Activated B cell treated with CpG ODN at 0.5 μM for 24 hours (primary cell): ENCODE measurements at regions of chr14 and their contacts with region 1.

Region 1: GRCh38 chr14:77028384-77029231 is at the start of gene IRF2BPL:
- DNase-seq: peak; percentile 89
- ATAC-seq: peak; percentile 68
- H3K4me3 Mint-ChIP-seq: peak within 1 kb of the TSS; percentile 88
- H3K27ac Mint-ChIP-seq: peak within 1 kb of the TSS; percentile 93
- H3K4me1 Mint-ChIP-seq: peaks cover 50% of the 10 kb centered on the region
- H3K27me3 Mint-ChIP-seq: no peaks in the 10 kb centered on the region
- CTCF ChIP-seq: no peak
- total RNA-seq, gene IRF2BPL: 14.0 and 14.5 TPM in 2 replicates

Region 2: DNA sequence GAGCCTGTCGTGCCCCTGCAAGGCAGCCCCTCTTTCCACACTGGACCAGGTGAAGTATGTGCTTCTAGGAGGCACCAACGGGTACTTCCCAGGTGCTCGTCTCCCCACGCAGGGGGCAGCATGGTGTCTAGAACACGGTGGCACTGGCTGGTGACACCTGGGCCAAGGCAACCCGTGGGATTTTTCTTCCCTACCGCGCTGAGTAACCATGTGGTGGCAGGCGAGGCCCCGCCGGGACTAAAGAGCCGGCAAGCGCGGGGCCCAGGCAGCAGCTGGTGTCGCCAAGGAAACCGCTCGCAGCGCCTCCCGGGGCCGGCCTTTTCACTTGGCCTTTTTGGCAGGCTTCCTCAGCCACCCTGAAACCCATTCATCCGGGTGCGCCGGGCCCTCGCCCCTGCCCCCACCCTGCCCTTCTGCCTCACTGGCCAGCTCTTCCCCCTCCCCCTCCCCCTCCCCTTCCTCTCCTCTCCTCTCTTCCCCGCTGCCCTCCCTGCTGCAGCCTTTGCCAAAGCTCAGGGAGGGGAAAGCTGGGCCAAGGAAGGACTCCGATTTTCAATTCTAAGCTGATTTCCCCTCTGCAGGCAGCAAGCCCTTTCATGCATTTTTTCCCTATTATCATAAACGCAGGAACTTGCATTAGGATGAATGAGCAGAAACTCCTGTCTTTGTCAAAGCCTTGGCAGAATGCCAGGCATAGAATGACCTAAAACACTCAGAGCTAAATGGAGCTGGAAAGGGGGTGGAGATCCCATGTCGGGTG is 81.3 kb before region 1 on chr14:
- CTCF ChIA-PET with region 1: interaction called, 10 read pairs
- POLR2A ChIA-PET with region 1: interaction called, 36 read pairs
- intact Hi-C with region 1: loop called (anchors 1 kb)
- DNase-seq: peak; percentile 69
- ATAC-seq: peak; percentile 93
- H3K4me3 Mint-ChIP-seq: peak overlapping the region; percentile 19
- H3K27ac Mint-ChIP-seq: no peak overlapping the region
- H3K4me1 Mint-ChIP-seq: peaks cover 19% of the 10 kb centered on the region
- H3K27me3 Mint-ChIP-seq: no peaks in the 10 kb centered on the region
- CTCF ChIP-seq: no peak

Region 3: DNA sequence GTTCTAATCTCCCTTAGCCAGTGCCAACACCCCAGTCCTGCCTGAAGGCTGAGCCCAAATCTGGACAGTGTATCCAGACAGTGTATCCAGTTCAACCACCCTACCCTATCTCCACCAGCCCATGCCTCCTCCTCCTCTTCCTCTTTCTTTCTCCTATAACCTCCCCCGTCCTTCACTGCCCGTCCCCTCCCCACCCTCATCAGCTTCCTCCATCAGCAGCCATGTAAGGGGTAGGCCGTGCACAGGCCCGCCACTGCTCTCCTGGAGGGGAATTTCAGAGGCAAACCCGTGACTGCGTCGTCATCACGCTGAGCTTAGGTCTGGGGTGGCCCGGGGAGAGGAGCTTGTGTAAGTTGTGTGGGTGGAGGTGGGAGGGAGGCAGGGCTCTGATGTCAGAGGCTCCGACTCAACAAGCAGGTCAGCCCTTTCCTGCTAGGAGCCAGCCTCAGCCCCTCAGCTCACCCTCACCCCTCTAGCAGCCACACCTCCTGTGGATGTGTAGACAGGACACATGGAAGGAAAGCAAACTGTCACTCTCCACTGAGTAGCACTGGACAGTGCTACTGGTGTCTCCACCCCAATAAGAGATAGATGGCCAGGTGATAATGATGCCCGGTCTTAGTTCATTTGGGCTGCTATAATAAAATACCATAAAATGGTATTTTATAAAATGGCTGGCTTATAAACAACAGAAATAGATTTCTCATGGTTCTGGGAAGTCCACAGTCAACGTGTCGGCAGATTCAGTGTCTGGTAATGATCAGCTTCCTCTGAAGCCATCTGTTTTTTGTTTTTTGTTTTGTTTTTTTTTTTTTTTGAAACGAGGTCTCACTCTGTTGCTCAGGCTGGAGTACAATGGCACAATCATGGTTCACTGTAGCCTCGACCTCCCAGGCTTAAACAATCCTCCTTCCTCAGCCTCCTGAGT is 50.6 kb before region 1 on chr14:
- CTCF ChIA-PET with region 1: interaction called, 4 read pairs
- POLR2A ChIA-PET with region 1: interaction called, 31 read pairs
- intact Hi-C with region 1: loop called (anchors 1 kb)
- DNase-seq: peak; percentile 74
- ATAC-seq: peak; percentile 96
- H3K4me3 Mint-ChIP-seq: peak overlapping the region; percentile 63
- H3K27ac Mint-ChIP-seq: peak overlapping the region; percentile 88
- H3K4me1 Mint-ChIP-seq: peaks cover 31% of the 10 kb centered on the region
- H3K27me3 Mint-ChIP-seq: no peaks in the 10 kb centered on the region
- CTCF ChIP-seq: no peak

Region 4: GRCh38 chr14:77053046-77053841 is 24.6 kb after region 1 on chr14:
- CTCF ChIA-PET with region 1: interaction called, 30 read pairs
- POLR2A ChIA-PET with region 1: interaction called, 18 read pairs
- intact Hi-C with region 1: loop called (anchors 1 kb)
- DNase-seq: peak; percentile 79
- ATAC-seq: peak; percentile 90
- H3K4me3 Mint-ChIP-seq: no peak overlapping the region
- H3K27ac Mint-ChIP-seq: peak overlapping the region; percentile 24
- H3K4me1 Mint-ChIP-seq: peaks cover 8% of the 10 kb centered on the region
- H3K27me3 Mint-ChIP-seq: no peaks in the 10 kb centered on the region
- CTCF ChIP-seq: peak; percentile 74

Region 5: DNA sequence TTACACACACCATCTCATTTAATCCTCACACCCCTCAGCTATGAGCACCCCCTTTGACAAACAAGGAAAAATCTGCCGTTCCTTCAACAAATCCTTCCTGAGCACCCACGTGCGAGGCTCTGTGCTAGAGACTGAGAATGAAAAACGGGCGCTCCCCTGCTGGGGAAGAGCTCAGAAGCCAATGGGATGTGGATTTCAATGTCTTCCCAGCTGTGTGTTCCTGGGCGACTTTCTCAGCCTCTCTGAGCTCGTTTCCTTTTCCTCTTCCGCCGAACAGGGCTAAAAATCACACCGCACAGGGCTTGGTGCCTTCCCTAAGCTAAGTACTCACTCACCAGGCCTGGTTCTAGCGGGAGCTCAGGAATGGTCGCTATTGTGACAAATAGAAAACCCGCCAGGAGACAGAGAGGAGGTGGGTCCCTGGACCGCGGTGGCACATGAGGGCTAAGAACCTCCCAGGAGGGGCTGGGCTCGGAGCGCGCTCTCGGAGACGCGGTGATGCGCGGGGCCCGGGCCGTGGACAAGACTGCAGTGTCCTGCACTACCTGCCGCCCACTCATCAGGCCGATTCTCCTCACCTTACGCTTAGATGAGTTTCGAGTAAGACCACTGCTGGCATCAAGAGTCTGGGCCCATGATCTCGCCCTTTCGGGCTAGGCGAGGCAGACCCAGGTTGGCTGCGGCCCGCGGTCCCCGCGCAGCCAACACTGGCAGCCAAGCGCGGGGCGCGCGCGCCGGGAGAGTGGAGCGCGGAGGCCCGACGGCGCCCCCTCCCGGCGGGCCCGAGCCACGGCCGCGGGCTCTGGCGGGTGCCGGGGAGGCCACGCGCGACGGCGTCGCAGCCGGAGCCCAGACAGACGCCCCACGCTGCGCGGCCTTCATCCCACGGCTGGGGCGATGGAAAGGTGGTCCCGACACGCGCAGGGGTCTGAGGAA is 96.0 kb after region 1 on chr14:
- CTCF ChIA-PET with region 1: no interaction called
- POLR2A ChIA-PET with region 1: interaction called, 41 read pairs
- intact Hi-C with region 1: loop called (anchors 2 kb)
- DNase-seq: peak; percentile 80
- ATAC-seq: peak; percentile 35
- H3K4me3 Mint-ChIP-seq: peak overlapping the region; percentile 85
- H3K27ac Mint-ChIP-seq: peak overlapping the region; percentile 98
- H3K4me1 Mint-ChIP-seq: peaks cover 61% of the 10 kb centered on the region
- H3K27me3 Mint-ChIP-seq: peaks cover 5% of the 10 kb centered on the region
- CTCF ChIP-seq: no peak